Caco-2 (cell line): ENCODE measurements at regions of chr7 and their contacts with region 1.

Region 1: DNA sequence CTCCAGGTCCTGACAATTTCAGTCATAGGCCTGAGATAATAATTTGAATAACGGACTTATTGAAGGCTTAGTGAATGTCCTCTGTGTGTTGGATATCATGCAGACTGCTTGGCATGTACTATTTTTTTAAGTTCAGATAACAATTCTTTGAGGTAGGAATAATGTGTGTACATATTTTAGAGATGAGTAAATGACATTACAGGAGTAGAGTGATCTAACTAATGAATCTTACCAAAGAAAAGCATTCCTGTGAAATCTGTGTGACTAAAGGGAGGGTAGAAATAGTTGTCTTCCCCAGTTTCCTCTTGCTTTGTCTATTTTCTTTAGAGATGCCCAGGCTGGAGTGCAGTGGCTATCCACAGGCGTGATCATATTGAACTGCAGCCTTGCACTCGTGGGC is 391.8 kb upstream of the ETV1 start:
- DNase-seq: no peak
- H3K4me3 ChIP-seq: no peak overlapping the region
- H3K4me3 Mint-ChIP-seq: no peak overlapping the region
- H3K27ac Mint-ChIP-seq: no peak overlapping the region
- H3K4me1 ChIP-seq: no peaks in the 10 kb centered on the region; the same call in 1 of the 2 replicates
- H3K4me1 Mint-ChIP-seq: no peaks in the 10 kb centered on the region
- H3K27me3 ChIP-seq: no peaks in the 10 kb centered on the region
- H3K27me3 Mint-ChIP-seq: no peaks in the 10 kb centered on the region
- CTCF ChIP-seq: no peak

Region 2: DNA sequence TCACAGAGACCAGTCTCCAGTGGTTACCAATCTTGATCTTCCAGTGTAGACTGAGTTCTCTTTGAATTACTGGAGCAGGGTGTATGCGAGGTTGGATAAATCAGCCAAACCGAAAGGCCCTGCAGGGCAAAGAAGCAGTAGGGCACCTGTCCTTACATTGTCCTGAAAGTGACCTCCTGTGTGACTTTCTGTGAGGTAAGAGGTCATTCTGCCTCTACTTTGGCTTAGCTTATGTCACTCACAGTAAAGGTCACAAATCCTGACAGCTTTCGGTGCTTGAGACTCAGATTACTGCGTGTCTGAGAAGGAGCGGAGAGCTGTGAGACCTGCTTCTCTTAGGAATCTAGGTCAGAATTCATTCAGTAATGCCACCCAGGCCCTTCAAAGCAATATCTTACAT is 139.1 kb before region 1 on chr7:
- CTCF ChIA-PET with region 1: interaction called, 10 read pairs
- POLR2A ChIA-PET with region 1: no interaction called
- intact Hi-C with region 1: no loop called
- DNase-seq: no peak
- H3K4me3 ChIP-seq: no peak overlapping the region
- H3K4me3 Mint-ChIP-seq: no peak overlapping the region
- H3K27ac Mint-ChIP-seq: no peak overlapping the region
- H3K4me1 ChIP-seq: no peaks in the 10 kb centered on the region
- H3K4me1 Mint-ChIP-seq: no peaks in the 10 kb centered on the region
- H3K27me3 ChIP-seq: no peaks in the 10 kb centered on the region; the same call in 1 of the 2 replicates
- H3K27me3 Mint-ChIP-seq: no peaks in the 10 kb centered on the region
- CTCF ChIP-seq: no peak